ENCODE measurements at regions of chr21 and their contacts with region 1.

Region 1: DNA sequence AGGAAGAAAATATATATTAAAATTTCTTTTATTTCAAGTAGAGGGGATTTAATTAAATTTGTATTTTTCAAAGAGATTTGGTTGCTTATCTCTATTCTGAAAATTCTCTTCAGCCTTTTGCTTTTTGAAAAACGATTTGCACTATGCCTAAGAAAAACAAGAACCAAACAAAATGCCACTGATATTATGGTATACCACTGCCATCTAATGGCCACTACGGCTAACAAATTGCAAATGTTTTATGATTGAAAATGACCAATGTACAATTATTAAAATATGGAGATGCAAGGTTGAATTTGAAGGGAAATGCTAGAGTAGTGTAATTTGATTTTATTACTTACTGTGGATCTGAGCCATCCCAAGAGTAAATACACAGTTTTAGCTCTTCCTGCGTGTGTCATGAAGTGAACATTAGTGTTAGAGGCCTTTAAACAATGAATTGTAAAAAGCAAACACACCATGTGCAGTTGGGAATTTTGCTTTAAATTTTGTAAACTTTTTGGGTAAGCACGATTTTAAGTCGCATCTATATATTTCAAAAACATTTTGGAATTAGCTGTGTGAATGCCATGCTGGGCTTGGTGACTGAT is 137.4 kb upstream of the USP25 start:
- DNase-seq: peak; percentile 60
- H3K4me3 Mint-ChIP-seq: no peak overlapping the region
- H3K27ac Mint-ChIP-seq: no peak overlapping the region
- H3K4me1 Mint-ChIP-seq: no peaks in the 10 kb centered on the region
- H3K27me3 Mint-ChIP-seq: no peaks in the 10 kb centered on the region
- CTCF ChIP-seq: peak; percentile 57

Region 2: DNA sequence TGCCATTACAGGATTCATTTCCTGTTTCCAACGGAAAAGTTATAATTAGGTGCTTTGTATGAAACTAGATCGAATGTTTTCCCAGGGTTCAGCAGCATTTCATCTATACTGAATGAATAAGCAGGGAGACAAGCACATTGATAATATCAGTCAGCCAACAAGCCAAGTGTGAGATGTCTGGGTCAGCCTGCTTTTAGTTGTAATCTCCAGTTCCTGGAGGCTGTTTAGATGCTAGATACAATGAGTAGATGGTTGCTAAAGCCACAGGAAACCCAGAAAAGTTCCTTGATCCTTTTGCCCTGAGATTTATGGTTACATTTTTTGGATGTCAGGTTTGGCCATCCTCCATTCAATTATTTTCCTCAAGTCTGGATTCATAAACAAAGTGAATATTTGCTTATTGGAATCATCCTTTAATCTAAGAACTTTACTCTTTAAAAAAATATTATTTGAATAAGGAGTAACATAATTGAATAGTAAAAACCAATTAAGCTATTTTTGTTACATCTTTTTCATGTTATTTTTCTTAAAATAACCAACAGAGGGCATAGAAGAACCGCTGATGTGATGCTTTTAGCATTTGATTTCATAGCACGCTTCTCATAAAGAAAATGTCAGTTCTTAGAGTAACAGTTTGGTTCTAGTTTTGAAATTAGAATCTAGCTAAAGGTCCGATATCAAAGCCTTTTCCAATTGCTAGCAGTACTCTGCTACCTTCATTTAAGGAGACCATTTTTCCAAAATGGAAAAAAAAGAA is 1286.0 kb before region 1 on chr21:
- CTCF ChIA-PET with region 1: no interaction called
- POLR2A ChIA-PET with region 1: no interaction called
- intact Hi-C with region 1: loop called (anchors 5 kb)
- DNase-seq: peak; percentile 46
- H3K4me3 Mint-ChIP-seq: no peak overlapping the region
- H3K27ac Mint-ChIP-seq: no peak overlapping the region
- H3K4me1 Mint-ChIP-seq: peaks cover 8% of the 10 kb centered on the region
- H3K27me3 Mint-ChIP-seq: no peaks in the 10 kb centered on the region
- CTCF ChIP-seq: peak; percentile 55

Region 3: DNA sequence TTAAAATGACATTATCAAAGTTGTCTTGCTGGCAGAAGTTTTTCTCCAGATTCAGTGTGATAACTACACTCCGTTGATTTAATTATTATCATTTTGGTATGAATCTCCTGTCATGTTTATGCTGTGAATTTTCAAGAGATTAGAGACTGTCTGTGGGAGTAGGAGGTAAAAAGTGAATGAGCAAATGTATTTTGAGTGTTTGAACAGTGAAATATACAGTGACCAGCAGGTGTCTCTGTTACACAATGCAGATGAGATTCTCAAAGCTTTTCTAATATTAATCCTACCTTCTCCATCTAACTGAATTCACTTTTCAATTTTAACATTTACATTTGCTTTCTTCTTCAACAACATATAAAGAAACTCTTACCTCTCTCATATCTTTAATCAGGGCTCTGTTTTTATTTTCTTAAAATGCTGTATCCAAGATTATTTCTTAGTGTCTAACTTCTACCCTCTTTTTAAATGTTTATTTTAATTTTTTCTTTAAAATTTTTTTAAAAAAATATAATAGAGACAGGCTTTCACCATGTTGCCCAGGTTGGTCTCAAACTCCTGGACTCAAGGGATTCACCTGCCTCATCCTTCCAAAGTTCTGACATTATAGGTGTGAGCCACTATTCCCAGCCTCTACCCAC is 1188.6 kb before region 1 on chr21:
- CTCF ChIA-PET with region 1: interaction called, 4 read pairs
- POLR2A ChIA-PET with region 1: no interaction called
- intact Hi-C with region 1: loop called (anchors 5 kb)
- DNase-seq: peak; percentile 47
- H3K4me3 Mint-ChIP-seq: no peak overlapping the region
- H3K27ac Mint-ChIP-seq: no peak overlapping the region
- H3K4me1 Mint-ChIP-seq: no peaks in the 10 kb centered on the region
- H3K27me3 Mint-ChIP-seq: no peaks in the 10 kb centered on the region
- CTCF ChIP-seq: peak; percentile 50

Region 4: GRCh38 chr21:14773777-14774345 is 818.5 kb before region 1 on chr21:
- CTCF ChIA-PET with region 1: no interaction called
- POLR2A ChIA-PET with region 1: no interaction called
- intact Hi-C with region 1: loop called (anchors 5 kb)
- DNase-seq: peak; percentile 72
- H3K4me3 Mint-ChIP-seq: no peak overlapping the region
- H3K27ac Mint-ChIP-seq: no peak overlapping the region
- H3K4me1 Mint-ChIP-seq: no peaks in the 10 kb centered on the region
- H3K27me3 Mint-ChIP-seq: no peaks in the 10 kb centered on the region
- CTCF ChIP-seq: peak; percentile 65

Region 5: GRCh38 chr21:14864211-14865021 is 728.0 kb before region 1 on chr21:
- CTCF ChIA-PET with region 1: interaction called, 3 read pairs
- POLR2A ChIA-PET with region 1: no interaction called
- intact Hi-C with region 1: loop called (anchors 1 kb)
- DNase-seq: peak; percentile 78
- H3K4me3 Mint-ChIP-seq: no peak overlapping the region
- H3K27ac Mint-ChIP-seq: peak overlapping the region; percentile 29
- H3K4me1 Mint-ChIP-seq: peaks cover 30% of the 10 kb centered on the region
- H3K27me3 Mint-ChIP-seq: no peaks in the 10 kb centered on the region
- CTCF ChIP-seq: peak; percentile 45

Region 6: GRCh38 chr21:15826147-15826780 is 233.9 kb after region 1 on chr21:
- CTCF ChIA-PET with region 1: no interaction called
- POLR2A ChIA-PET with region 1: no interaction called
- intact Hi-C with region 1: loop called (anchors 5 kb)
- DNase-seq: peak; percentile 83
- H3K4me3 Mint-ChIP-seq: no peak overlapping the region
- H3K27ac Mint-ChIP-seq: no peak overlapping the region
- H3K4me1 Mint-ChIP-seq: peaks cover 6% of the 10 kb centered on the region
- H3K27me3 Mint-ChIP-seq: no peaks in the 10 kb centered on the region
- CTCF ChIP-seq: peak; percentile 60

Measured in MCF 10A (cell line).